ENCODE measurements at regions of chr2 and their contacts with region 1.

Region 1: GRCh38 chr2:191150600-191151330 is at the start of gene STAT4:
- DNase-seq: peak; percentile 39
- H3K4me3 Mint-ChIP-seq: peak within 1 kb of the TSS; percentile 81
- H3K27ac Mint-ChIP-seq: peak within 1 kb of the TSS; percentile 34
- H3K4me1 Mint-ChIP-seq: peaks cover 32% of the 10 kb centered on the region
- H3K27me3 Mint-ChIP-seq: no peaks in the 10 kb centered on the region
- CTCF ChIP-seq: no peak
- total RNA-seq, gene STAT4: 0.85 and 1.3 TPM in 2 replicates

Region 2: DNA sequence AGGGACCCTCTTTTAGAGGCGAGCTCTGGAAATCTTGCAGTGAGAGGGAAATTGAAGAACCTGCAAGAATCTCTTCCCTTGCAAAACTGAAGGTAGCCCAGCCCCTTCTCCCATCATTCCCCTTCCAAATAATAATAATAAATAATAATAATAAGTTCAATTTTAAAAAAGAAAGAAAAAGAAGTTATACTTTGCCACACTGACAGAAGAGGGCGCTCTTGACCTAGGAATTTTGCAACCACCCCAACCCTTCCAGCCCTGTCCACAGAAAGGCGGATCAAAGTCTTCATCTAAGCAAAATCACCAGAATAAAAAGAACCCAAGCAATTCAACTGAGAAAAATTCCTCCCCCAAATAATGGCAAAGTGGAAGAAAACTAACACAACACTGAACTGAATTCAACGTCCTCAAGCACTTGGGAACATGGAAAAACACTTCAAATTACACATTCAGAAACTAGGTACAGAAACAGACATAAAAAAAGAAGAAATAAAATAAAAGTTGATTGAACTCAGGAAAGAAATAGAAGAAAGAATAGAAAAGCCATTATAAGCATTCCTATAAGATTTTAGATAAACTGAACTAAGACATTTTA is 369.1 kb before region 1 on chr2:
- CTCF ChIA-PET with region 1: no interaction called
- intact Hi-C with region 1: loop called (anchors 5 kb)
- DNase-seq: peak; percentile 69
- H3K4me3 Mint-ChIP-seq: no peak overlapping the region
- H3K27ac Mint-ChIP-seq: no peak overlapping the region
- H3K4me1 Mint-ChIP-seq: peaks cover 13% of the 10 kb centered on the region
- H3K27me3 Mint-ChIP-seq: peaks cover 8% of the 10 kb centered on the region
- CTCF ChIP-seq: peak; percentile 77

Region 3: GRCh38 chr2:191051825-191052778 is 98.7 kb before region 1 on chr2:
- CTCF ChIA-PET with region 1: interaction called, 62 read pairs
- intact Hi-C with region 1: loop called (anchors 1 kb)
- DNase-seq: peak; percentile 13
- H3K4me3 Mint-ChIP-seq: no peak overlapping the region
- H3K27ac Mint-ChIP-seq: no peak overlapping the region
- H3K4me1 Mint-ChIP-seq: no peaks in the 10 kb centered on the region
- H3K27me3 Mint-ChIP-seq: no peaks in the 10 kb centered on the region
- CTCF ChIP-seq: peak; percentile 56